Right ventricle myocardium inferior (tissue), 1 donor: ENCODE measurements at regions of chrX and their contacts with region 1.

Region 1: DNA sequence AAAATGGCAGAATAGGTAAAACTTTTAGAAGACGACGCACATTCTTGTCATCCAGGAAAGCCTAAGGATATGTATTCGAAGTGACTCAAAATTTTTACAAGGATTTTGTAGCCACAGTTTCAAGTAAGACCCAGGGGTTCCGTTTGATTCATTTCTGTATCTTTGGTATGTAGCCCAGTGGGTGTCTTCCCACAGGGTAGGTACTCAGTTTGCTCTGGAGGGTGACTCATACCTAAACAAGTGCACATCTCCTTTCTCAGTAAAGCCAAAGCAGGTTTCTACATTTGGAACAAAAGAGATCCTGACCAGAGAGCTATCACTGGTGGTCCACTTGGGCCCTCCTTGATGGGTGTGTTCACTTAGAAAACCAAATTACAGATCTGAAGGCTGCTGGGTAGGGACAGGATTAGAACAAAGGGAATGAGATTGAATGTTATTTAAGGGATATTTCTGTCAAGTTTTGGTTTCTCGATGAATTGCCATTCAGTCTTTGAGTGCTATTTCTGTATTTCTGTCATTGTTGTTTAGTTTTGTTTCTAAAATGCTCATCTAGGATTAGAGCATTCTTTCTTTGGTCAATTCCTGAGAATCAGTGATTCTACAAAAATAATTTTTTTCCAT is 56.1 kb downstream of the PLS3 start:
- DNase-seq: no peak
- ATAC-seq: no peak

Region 2: GRCh38 chrX:115584696-115585095 is 32.4 kb before region 1 on chrX:
- intact Hi-C with region 1: loop called (anchors 5 kb)
- DNase-seq: no peak
- ATAC-seq: no peak